ENCODE measurements at regions of chr21 and their contacts with region 1.

Region 1: GRCh38 chr21:45074048-45074817 is at the start of gene ADARB1:
- DNase-seq: peak; percentile 75
- ATAC-seq: peak; percentile 13
- H3K4me3 Mint-ChIP-seq: peak within 1 kb of the TSS; percentile 88
- H3K27ac Mint-ChIP-seq: peak within 1 kb of the TSS; percentile 91
- H3K4me1 Mint-ChIP-seq: peaks cover 42% of the 10 kb centered on the region
- H3K27me3 Mint-ChIP-seq: no peaks in the 10 kb centered on the region
- total RNA-seq, gene ADARB1: 32.8 to 37.7 TPM

Region 2: GRCh38 chr21:44801468-44802395 is 272.5 kb before region 1 on chr21 and contains the start of gene UBE2G2:
- CTCF ChIA-PET with region 1: interaction called, 3 read pairs
- POLR2A ChIA-PET with region 1: no interaction called
- intact Hi-C with region 1: loop called in 1 of 2 experiments (anchors 5 kb)
- DNase-seq: peak; percentile 92
- ATAC-seq: peak; percentile 95
- H3K4me3 Mint-ChIP-seq: peak within 1 kb of the TSS; percentile 94
- H3K27ac Mint-ChIP-seq: peak within 1 kb of the TSS; percentile 90
- H3K4me1 Mint-ChIP-seq: peaks cover 54% of the 10 kb centered on the region
- H3K27me3 Mint-ChIP-seq: no peaks in the 10 kb centered on the region
- total RNA-seq, gene UBE2G2: 103 to 121 TPM

Region 3: DNA sequence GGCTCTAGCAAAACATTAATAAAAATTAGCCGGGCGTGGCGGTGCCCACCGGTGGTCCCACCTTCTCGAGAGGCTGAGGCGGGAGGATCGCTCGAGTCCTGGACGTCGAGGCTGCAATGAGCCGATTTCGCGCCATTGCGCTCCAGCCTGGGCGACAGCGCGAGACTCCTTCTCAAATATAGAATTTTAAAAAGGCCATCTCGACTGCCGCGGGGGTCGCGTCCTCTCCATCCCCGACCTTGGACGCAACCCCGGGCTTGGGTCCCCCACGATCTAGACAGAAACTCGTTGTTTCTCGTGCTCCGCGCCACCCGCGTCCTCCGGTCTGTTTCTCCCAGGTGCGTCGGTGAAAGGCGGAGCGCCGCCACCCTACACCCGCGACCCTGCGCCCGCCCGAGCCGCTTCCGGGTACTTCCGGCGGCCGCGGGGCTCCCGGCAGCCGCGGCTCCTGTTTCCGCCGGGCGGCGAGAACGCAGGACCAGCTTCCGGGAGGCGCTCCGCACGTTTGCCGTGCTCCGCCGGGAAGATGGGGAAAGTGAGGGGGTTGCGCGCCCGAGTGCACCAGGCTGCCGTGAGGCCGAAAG is 134.6 kb before region 1 on chr21 and contains the start of gene SLX9:
- CTCF ChIA-PET with region 1: no interaction called
- POLR2A ChIA-PET with region 1: no interaction called
- intact Hi-C with region 1: loop called in 1 of 2 experiments (anchors 1 kb)
- DNase-seq: peak; percentile 91
- ATAC-seq: peak; percentile 96
- H3K4me3 Mint-ChIP-seq: peak within 1 kb of the TSS; percentile 88
- H3K27ac Mint-ChIP-seq: peak within 1 kb of the TSS; percentile 86
- H3K4me1 Mint-ChIP-seq: peaks cover 37% of the 10 kb centered on the region
- H3K27me3 Mint-ChIP-seq: no peaks in the 10 kb centered on the region
- total RNA-seq, gene SLX9: 60.8 to 68.8 TPM

Region 4: GRCh38 chr21:45130324-45130774 is 56.1 kb after region 1 on chr21:
- CTCF ChIA-PET with region 1: interaction called, 19 read pairs
- POLR2A ChIA-PET with region 1: no interaction called
- intact Hi-C with region 1: loop called (anchors 2 to 5 kb)
- DNase-seq: no peak
- ATAC-seq: peak; percentile 35
- H3K4me3 Mint-ChIP-seq: no peak overlapping the region
- H3K27ac Mint-ChIP-seq: no peak overlapping the region
- H3K4me1 Mint-ChIP-seq: peaks cover 31% of the 10 kb centered on the region
- H3K27me3 Mint-ChIP-seq: no peaks in the 10 kb centered on the region

Region 5: DNA sequence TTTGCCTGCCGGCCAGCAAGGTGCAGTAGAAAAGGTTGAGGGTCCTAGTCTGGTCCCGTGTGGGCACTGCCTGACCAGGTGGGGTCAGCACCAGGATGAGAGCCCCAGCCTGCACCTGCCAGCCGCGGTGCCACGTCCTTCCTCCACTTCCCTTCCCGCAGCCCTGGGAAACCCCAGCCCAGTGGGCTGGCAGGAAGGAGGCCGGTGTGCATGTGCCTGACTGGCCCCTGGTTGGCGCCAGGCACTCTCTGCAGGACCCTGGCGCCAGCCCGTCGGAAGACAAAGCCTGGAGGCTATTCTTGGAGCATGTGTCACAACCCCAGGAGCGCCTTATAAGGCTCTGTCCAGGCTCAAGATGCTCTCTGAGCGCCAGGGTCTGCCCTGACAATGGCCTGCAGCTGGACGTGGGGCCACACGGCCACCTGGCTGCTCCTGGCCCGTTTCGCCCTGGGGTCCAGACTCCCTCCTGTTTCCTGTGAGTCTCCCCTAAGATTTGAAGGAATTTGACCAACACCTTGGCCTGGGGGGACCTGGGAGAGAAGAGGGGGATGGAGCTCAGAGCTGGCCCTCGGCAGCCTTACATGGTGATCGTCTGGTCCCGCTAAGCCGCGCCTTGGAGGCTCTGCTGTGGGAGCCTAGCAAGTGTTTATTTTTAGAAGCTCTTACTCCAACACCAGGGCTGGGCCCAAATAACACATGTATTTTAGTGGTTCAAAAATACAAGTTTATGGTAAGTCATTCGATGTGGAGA is 245.4 kb after region 1 on chr21:
- CTCF ChIA-PET with region 1: no interaction called
- POLR2A ChIA-PET with region 1: no interaction called
- intact Hi-C with region 1: no loop called
- DNase-seq: peak; percentile 3
- ATAC-seq: no peak
- H3K4me3 Mint-ChIP-seq: no peak overlapping the region
- H3K27ac Mint-ChIP-seq: no peak overlapping the region
- H3K4me1 Mint-ChIP-seq: peaks cover 17% of the 10 kb centered on the region
- H3K27me3 Mint-ChIP-seq: peaks cover 3% of the 10 kb centered on the region

Region 6: DNA sequence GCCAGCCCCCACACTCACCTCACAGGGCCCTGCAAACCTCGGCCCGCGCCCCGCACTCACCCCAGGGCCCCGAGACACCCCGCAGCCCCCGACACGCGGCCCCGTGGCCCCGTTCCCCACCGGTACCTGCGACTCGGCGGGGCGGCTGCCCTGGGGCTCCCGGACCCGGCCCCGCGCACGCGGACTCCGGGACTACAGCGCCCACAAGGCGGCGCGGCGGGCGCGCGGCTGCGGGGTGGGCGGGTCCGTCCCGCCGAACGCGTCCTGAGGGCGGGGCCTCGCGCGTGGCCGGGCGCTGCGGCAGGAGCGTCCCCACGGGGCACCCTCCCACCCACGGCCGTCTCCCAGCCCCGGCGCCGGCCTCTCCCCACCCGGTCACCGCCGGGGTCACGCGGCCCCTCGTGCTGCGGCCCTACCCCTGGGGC is 468.0 kb after region 1 on chr21 and contains the start of gene SLC19A1:
- CTCF ChIA-PET with region 1: no interaction called
- POLR2A ChIA-PET with region 1: no interaction called
- intact Hi-C with region 1: loop called in 1 of 2 experiments (anchors 2 kb)
- DNase-seq: peak; percentile 86
- ATAC-seq: peak; percentile 86
- H3K4me3 Mint-ChIP-seq: peak within 1 kb of the TSS; percentile 80
- H3K27ac Mint-ChIP-seq: peak within 1 kb of the TSS; percentile 80
- H3K4me1 Mint-ChIP-seq: peaks cover 20% of the 10 kb centered on the region
- H3K27me3 Mint-ChIP-seq: no peaks in the 10 kb centered on the region
- total RNA-seq, gene SLC19A1: 46.1 to 50.0 TPM

Measured in activated CD4-positive, alpha-beta T cell treated with anti-CD3 and anti-CD28 coated beads for 36 hours (primary cell).